H1 (cell line): ENCODE measurements at regions of chr12 and their contacts with region 1.

Region 1: DNA sequence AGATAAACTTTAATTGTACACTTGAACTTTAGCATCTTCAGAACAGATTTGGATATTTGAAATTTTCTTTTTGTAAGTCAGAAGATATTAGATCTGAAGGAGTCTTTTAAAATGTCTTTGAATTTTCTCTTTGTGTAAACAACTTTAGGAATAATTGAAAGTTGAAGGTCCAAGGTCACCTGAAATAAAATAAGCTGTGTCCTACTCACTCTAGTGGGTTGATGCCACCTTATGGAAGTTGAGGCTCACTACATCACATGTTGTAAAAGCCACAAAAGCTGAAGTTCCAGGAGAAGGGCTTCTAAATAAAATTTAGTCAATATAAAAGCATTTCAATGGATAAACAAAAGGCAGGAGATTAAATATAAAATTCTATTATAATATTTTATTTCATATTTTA is 122.0 kb upstream of the ATXN7L3B start:
- DNase-seq: no peak
- H3K4me3 ChIP-seq: no peak overlapping the region
- H3K27ac ChIP-seq: no peak overlapping the region
- H3K4me1 ChIP-seq: no peaks in the 10 kb centered on the region
- H3K27me3 ChIP-seq: no peaks in the 10 kb centered on the region
- CTCF ChIP-seq: peak in 2 of 3 experiments; percentile 49 to 54; a peak in 3 of 4 replicates
- EP300 ChIP-seq: no peak
- POLR2A ChIP-seq: no peak
- RAD21 ChIP-seq: peak; percentile 63 to 70

Region 2: DNA sequence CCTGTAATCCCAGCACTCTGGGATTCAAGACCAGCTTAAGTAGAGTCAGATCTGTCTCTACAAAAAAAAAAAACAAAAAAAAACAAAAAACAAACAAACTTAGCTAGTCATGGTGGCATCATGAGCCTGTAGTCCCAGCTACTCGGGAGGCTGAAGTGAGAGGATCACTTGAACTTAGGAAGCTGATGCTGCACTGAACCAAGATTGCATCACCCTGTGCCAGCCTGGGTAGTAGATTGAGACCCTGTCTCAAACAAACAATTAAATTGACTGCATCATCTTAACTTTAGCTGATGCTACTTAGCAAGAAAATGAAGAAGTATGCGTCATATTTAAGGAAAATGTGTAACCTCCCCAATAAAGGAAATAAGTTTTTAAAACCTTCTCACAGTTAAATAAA is 14.6 kb before region 1 on chr12:
- CTCF ChIA-PET with region 1: interaction called, 15 read pairs
- POLR2A ChIA-PET with region 1: no interaction called
- DNase-seq: no peak
- H3K4me3 ChIP-seq: no peak overlapping the region
- H3K27ac ChIP-seq: no peak overlapping the region
- H3K4me1 ChIP-seq: no peaks in the 10 kb centered on the region
- H3K27me3 ChIP-seq: no peaks in the 10 kb centered on the region
- CTCF ChIP-seq: no peak
- EP300 ChIP-seq: no peak
- POLR2A ChIP-seq: no peak
- RAD21 ChIP-seq: no peak